H1 (cell line): ENCODE measurements at regions of chr1 and their contacts with region 1.

Region 1: GRCh38 chr1:43048601-43049011 is 89.9 kb upstream of the SLC2A1 start:
- DNase-seq: no peak
- H3K4me3 ChIP-seq: no peak overlapping the region
- H3K27ac ChIP-seq: no peak overlapping the region
- H3K4me1 ChIP-seq: peaks cover 0 to 3% (median 0%) of the 10 kb centered on the region in 4 experiments; a peak in 1 of 7 replicates
- H3K27me3 ChIP-seq: no peaks in the 10 kb centered on the region; a peak in 1 of 7 replicates
- CTCF ChIP-seq: no peak
- EP300 ChIP-seq: no peak
- POLR2A ChIP-seq: no peak
- RAD21 ChIP-seq: no peak

Region 2: GRCh38 chr1:43034195-43034658 is 14.4 kb before region 1 on chr1:
- CTCF ChIA-PET with region 1: interaction called, 8 read pairs
- POLR2A ChIA-PET with region 1: interaction called, 11 read pairs
- DNase-seq: no peak
- H3K4me3 ChIP-seq: no peak overlapping the region
- H3K27ac ChIP-seq: no peak overlapping the region
- H3K4me1 ChIP-seq: peaks cover 0 to 8% (median 4%) of the 10 kb centered on the region in 4 experiments; a peak in 5 of 7 replicates
- H3K27me3 ChIP-seq: no peaks in the 10 kb centered on the region
- CTCF ChIP-seq: no peak
- EP300 ChIP-seq: no peak
- POLR2A ChIP-seq: no peak
- RAD21 ChIP-seq: no peak